ENCODE measurements at regions of chr13 and their contacts with region 1.

Region 1: GRCh38 chr13:66323745-66324144 is 906.4 kb downstream of the PCDH9 start:
- DNase-seq: no peak
- H3K4me3 ChIP-seq: no peak overlapping the region
- H3K27ac ChIP-seq: no peak overlapping the region
- H3K4me1 ChIP-seq: no peaks in the 10 kb centered on the region
- H3K27me3 ChIP-seq: no peaks in the 10 kb centered on the region
- CTCF ChIP-seq: no peak

Region 2: DNA sequence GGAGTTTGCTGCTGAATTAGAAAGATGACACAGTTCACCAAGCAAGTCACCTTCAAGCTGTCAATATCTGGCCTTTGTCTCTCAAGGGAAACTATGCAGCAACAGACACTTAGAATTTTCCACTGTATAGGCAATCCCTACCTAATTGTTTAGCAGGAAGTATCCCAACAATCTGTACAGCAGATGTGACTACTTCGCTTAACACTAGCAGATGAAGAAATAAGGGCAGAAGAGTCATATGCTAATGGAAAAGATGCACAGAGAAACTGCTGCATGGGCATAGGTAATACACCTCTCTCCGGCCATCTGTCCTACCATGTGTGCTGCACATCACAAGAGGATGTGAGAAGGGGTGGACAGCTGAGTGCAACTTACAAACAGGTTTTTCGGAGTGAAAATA is 55.1 kb after region 1 on chr13:
- CTCF ChIA-PET with region 1: no interaction called
- POLR2A ChIA-PET with region 1: interaction called, 15 read pairs
- intact Hi-C with region 1: no loop called
- DNase-seq: no peak
- H3K4me3 ChIP-seq: no peak overlapping the region
- H3K27ac ChIP-seq: no peak overlapping the region
- H3K4me1 ChIP-seq: no peaks in the 10 kb centered on the region
- H3K27me3 ChIP-seq: no peaks in the 10 kb centered on the region
- CTCF ChIP-seq: no peak

Measured in PC-9 (cell line).